Activated CD8-positive, alpha-beta T cell treated with anti-CD3 and anti-CD28 coated beads for 36 hours (primary cell): ENCODE measurements at regions of chr19 and their contacts with region 1.

Region 1: GRCh38 chr19:14366498-14366915 is 14.7 kb upstream of the ADGRE5 start:
- DNase-seq: peak; percentile 95
- ATAC-seq: peak; percentile 37
- H3K4me3 Mint-ChIP-seq: no peak overlapping the region
- H3K27ac Mint-ChIP-seq: peak overlapping the region; percentile 100
- H3K4me1 Mint-ChIP-seq: peaks cover 64% of the 10 kb centered on the region
- H3K27me3 Mint-ChIP-seq: no peaks in the 10 kb centered on the region
- CTCF ChIP-seq: no peak

Region 2: GRCh38 chr19:14136509-14137281 is 229.8 kb before region 1 on chr19 and contains the start of gene ASF1B:
- CTCF ChIA-PET with region 1: interaction called, 11 read pairs
- POLR2A ChIA-PET with region 1: no interaction called
- intact Hi-C with region 1: no loop called
- DNase-seq: peak; percentile 99
- ATAC-seq: peak; percentile 83
- H3K4me3 Mint-ChIP-seq: peak within 1 kb of the TSS; percentile 95
- H3K27ac Mint-ChIP-seq: peak within 1 kb of the TSS; percentile 98
- H3K4me1 Mint-ChIP-seq: peaks cover 36% of the 10 kb centered on the region
- H3K27me3 Mint-ChIP-seq: no peaks in the 10 kb centered on the region
- CTCF ChIP-seq: peak; percentile 67
- total RNA-seq, gene ASF1B: 53.5 to 55.3 TPM

Region 3: DNA sequence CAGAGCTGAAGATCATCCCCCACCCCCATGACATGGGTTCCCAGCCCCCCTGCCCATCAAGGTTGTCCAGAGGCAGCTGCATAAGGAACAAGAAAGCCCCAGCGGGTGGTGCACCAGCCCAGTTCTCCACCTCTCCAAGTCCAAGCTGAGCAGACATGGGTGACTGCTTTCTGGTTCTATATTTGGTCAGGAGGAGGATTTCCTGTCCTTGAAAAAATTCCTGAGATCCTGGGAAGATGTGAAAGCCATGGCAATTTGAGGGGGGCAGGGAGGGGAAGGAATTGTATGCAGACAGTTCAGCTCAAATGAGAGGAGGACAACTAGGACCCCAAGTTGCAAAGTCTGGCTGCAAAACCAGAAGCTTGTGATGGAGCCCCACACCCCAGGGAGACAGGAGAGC is 40.6 kb before region 1 on chr19:
- CTCF ChIA-PET with region 1: no interaction called
- POLR2A ChIA-PET with region 1: no interaction called
- intact Hi-C with region 1: no loop called
- DNase-seq: no peak
- ATAC-seq: no peak
- H3K4me3 Mint-ChIP-seq: no peak overlapping the region
- H3K27ac Mint-ChIP-seq: no peak overlapping the region
- H3K4me1 Mint-ChIP-seq: no peaks in the 10 kb centered on the region
- H3K27me3 Mint-ChIP-seq: no peaks in the 10 kb centered on the region
- CTCF ChIP-seq: no peak

Region 4: DNA sequence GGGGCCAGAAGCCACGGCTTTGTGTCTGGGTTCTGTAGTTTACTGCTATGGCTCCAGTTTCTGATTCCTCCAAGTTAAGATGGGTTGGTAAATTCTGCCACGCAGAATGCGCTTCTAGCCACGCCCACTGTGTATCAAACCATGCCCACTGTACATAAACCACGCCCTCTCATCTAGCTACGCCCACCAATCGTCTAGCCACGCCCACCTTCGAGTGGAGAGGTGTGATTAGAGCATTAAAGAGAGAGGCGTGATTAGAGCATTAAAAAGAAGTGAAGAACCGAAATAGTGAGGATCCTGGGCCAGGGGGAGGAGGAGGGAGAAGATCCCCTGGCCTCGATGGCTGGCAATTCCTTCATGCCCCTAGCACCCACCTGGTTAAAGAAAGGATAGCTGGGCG is 29.0 kb before region 1 on chr19:
- CTCF ChIA-PET with region 1: no interaction called
- POLR2A ChIA-PET with region 1: no interaction called
- intact Hi-C with region 1: no loop called
- DNase-seq: peak; percentile 63
- ATAC-seq: peak; percentile 56
- H3K4me3 Mint-ChIP-seq: no peak overlapping the region
- H3K27ac Mint-ChIP-seq: no peak overlapping the region
- H3K4me1 Mint-ChIP-seq: peaks cover 9% of the 10 kb centered on the region
- H3K27me3 Mint-ChIP-seq: no peaks in the 10 kb centered on the region
- CTCF ChIP-seq: no peak

Region 5: GRCh38 chr19:14354445-14354844 is 12.1 kb before region 1 on chr19:
- CTCF ChIA-PET with region 1: interaction called, 20 read pairs
- POLR2A ChIA-PET with region 1: interaction called, 5 read pairs
- intact Hi-C with region 1: no loop called
- DNase-seq: peak; percentile 26
- ATAC-seq: peak; percentile 38
- H3K4me3 Mint-ChIP-seq: no peak overlapping the region
- H3K27ac Mint-ChIP-seq: no peak overlapping the region
- H3K4me1 Mint-ChIP-seq: peaks cover 22% of the 10 kb centered on the region
- H3K27me3 Mint-ChIP-seq: no peaks in the 10 kb centered on the region
- CTCF ChIP-seq: no peak

Region 6: GRCh38 chr19:14383661-14384555 is 17.4 kb after region 1 on chr19:
- CTCF ChIA-PET with region 1: interaction called, 77 read pairs
- POLR2A ChIA-PET with region 1: interaction called, 247 read pairs
- intact Hi-C with region 1: loop called (anchors 2 kb)
- DNase-seq: peak; percentile 84
- ATAC-seq: peak; percentile 23
- H3K4me3 Mint-ChIP-seq: peak overlapping the region; percentile 99
- H3K27ac Mint-ChIP-seq: peak overlapping the region; percentile 100
- H3K4me1 Mint-ChIP-seq: peaks cover 31% of the 10 kb centered on the region
- H3K27me3 Mint-ChIP-seq: no peaks in the 10 kb centered on the region
- CTCF ChIP-seq: no peak

Region 7: GRCh38 chr19:14395710-14396336 is 29.3 kb after region 1 on chr19:
- CTCF ChIA-PET with region 1: interaction called, 7 read pairs
- POLR2A ChIA-PET with region 1: interaction called, 15 read pairs
- intact Hi-C with region 1: no loop called
- DNase-seq: no peak
- ATAC-seq: peak; percentile 17
- H3K4me3 Mint-ChIP-seq: no peak overlapping the region
- H3K27ac Mint-ChIP-seq: peak overlapping the region; percentile 52
- H3K4me1 Mint-ChIP-seq: peaks cover 13% of the 10 kb centered on the region
- H3K27me3 Mint-ChIP-seq: no peaks in the 10 kb centered on the region
- CTCF ChIP-seq: no peak

Region 8: GRCh38 chr19:14405758-14406644 is 39.5 kb after region 1 on chr19:
- CTCF ChIA-PET with region 1: interaction called, 82 read pairs
- POLR2A ChIA-PET with region 1: interaction called, 168 read pairs
- intact Hi-C with region 1: loop called (anchors 5 kb)
- DNase-seq: peak; percentile 93
- ATAC-seq: peak; percentile 84
- H3K4me3 Mint-ChIP-seq: peak overlapping the region; percentile 26
- H3K27ac Mint-ChIP-seq: peak overlapping the region; percentile 66
- H3K4me1 Mint-ChIP-seq: peaks cover 21% of the 10 kb centered on the region
- H3K27me3 Mint-ChIP-seq: no peaks in the 10 kb centered on the region
- CTCF ChIP-seq: peak; percentile 90

Region 9: GRCh38 chr19:14419106-14419813 is 52.8 kb after region 1 on chr19 and contains the start of gene DDX39A:
- CTCF ChIA-PET with region 1: interaction called, 5 read pairs
- POLR2A ChIA-PET with region 1: interaction called, 6 read pairs
- intact Hi-C with region 1: loop called (anchors 2 kb)
- DNase-seq: peak; percentile 99
- ATAC-seq: peak; percentile 93
- H3K4me3 Mint-ChIP-seq: peak within 1 kb of the TSS; percentile 93
- H3K27ac Mint-ChIP-seq: peak within 1 kb of the TSS; percentile 98
- H3K4me1 Mint-ChIP-seq: peaks cover 27% of the 10 kb centered on the region
- H3K27me3 Mint-ChIP-seq: no peaks in the 10 kb centered on the region
- CTCF ChIP-seq: no peak
- total RNA-seq, gene DDX39A: 217 to 226 TPM